A673 (cell line): ENCODE measurements at regions of chr9 and their contacts with region 1.

Region 1: DNA sequence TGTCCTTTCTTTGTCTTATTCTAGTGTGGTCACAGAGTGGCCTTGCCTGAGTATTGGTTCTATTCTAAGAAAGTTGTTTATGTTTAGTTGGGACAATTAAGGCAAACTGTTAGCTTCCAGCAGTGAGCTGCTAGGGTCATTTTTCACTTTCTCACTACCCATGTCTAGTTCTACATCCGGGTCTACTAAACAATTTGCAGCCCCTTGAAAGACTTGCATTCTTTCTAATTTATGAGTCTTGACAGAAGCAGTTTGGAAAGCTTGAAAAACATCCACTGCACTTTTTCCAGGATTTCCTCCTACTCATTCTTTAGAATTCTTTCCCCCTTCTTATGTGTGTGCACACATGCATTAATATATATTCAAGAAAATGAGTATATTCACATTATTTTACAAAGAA is 892.2 kb upstream of the ACO1 start:
- DNase-seq: no peak
- H3K4me3 ChIP-seq: no peak overlapping the region
- H3K27ac ChIP-seq: no peak overlapping the region
- H3K4me1 ChIP-seq: no peaks in the 10 kb centered on the region
- H3K27me3 ChIP-seq: no peaks in the 10 kb centered on the region
- CTCF ChIP-seq: no peak

Region 2: GRCh38 chr9:31394015-31394473 is 98.2 kb before region 1 on chr9:
- CTCF ChIA-PET with region 1: no interaction called
- POLR2A ChIA-PET with region 1: no interaction called
- intact Hi-C with region 1: loop called (anchors 5 kb)
- DNase-seq: peak; percentile 88
- H3K4me3 ChIP-seq: no peak overlapping the region
- H3K27ac ChIP-seq: no peak overlapping the region
- H3K4me1 ChIP-seq: peaks cover 32% of the 10 kb centered on the region
- H3K27me3 ChIP-seq: peaks cover 29% of the 10 kb centered on the region
- CTCF ChIP-seq: no peak